ENCODE measurements at regions of chr9 and their contacts with region 1.

Region 1: GRCh38 chr9:96245399-96245798 is 56.6 kb downstream of the HSD17B3 start:
- DNase-seq: no peak
- ATAC-seq: peak; percentile 39
- H3K4me3 ChIP-seq: no peak overlapping the region
- H3K27ac ChIP-seq: no peak overlapping the region
- H3K4me1 ChIP-seq: peaks cover 17 to 25% of the 10 kb centered on the region in 2 experiments
- H3K27me3 ChIP-seq: no peaks in the 10 kb centered on the region
- CTCF ChIP-seq: peak; percentile 24 to 71 (median 71); a peak in 5 of 6 replicates
- POLR2A ChIP-seq: no peak
- RAD21 ChIP-seq: peak; percentile 31

Region 2: GRCh38 chr9:96109680-96110351 is 135.6 kb before region 1 on chr9:
- CTCF ChIA-PET with region 1: no interaction called
- POLR2A ChIA-PET with region 1: no interaction called
- RAD21 ChIA-PET with region 1: no interaction called
- intact Hi-C with region 1: no loop called
- DNase-seq: no peak
- ATAC-seq: no peak
- H3K4me3 ChIP-seq: no peak overlapping the region
- H3K27ac ChIP-seq: no peak overlapping the region
- H3K4me1 ChIP-seq: no peaks in the 10 kb centered on the region
- H3K27me3 ChIP-seq: no peaks in the 10 kb centered on the region; the same call in 1 of the 2 replicates
- CTCF ChIP-seq: no peak
- POLR2A ChIP-seq: no peak
- RAD21 ChIP-seq: no peak

Region 3: DNA sequence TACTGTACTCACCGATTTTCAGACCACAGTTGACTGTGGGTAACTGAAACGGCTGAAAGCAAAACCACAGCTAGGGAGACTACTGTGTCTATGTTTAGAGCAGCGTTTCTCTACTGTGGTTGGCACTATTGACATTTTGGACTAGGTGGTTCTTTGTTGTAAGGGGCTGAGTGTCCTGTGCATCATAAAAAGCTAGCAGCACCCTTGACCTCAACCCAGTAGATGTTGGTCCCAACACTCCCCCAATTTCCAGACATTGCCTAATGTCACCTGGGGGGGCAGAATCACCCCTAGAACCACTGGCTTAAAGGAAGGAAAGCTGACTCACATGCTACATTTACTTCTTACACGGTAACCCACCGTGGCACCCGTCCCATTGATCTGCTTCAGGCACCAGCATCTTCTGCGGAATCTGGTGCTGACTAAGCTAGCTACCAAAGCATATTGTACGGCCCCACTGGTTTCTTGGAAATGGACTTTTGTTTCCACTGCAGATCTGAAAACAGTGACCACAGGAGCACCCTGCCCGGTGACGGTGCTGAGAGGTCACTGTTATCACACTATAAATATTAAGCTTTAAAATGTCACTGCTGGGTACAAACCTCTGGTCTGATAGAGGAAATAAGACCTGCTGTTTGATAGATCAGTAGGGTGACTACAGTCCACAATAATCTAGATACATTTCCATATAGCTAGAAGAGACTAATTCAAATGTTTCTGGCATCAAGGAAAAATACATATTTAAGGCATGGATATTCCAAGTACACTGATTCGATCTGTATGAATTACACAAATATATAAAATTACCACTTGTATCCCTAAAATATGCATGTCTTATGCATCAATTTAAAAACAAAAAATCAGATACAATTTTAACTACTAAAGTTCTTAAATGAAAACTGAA is 94.8 kb before region 1 on chr9:
- CTCF ChIA-PET with region 1: no interaction called
- POLR2A ChIA-PET with region 1: no interaction called
- RAD21 ChIA-PET with region 1: no interaction called
- intact Hi-C with region 1: no loop called
- DNase-seq: no peak
- ATAC-seq: no peak
- H3K4me3 ChIP-seq: no peak overlapping the region
- H3K27ac ChIP-seq: no peak overlapping the region
- H3K4me1 ChIP-seq: no peaks in the 10 kb centered on the region
- H3K27me3 ChIP-seq: peaks cover 12% of the 10 kb centered on the region
- CTCF ChIP-seq: no peak
- POLR2A ChIP-seq: no peak
- RAD21 ChIP-seq: no peak

Region 4: DNA sequence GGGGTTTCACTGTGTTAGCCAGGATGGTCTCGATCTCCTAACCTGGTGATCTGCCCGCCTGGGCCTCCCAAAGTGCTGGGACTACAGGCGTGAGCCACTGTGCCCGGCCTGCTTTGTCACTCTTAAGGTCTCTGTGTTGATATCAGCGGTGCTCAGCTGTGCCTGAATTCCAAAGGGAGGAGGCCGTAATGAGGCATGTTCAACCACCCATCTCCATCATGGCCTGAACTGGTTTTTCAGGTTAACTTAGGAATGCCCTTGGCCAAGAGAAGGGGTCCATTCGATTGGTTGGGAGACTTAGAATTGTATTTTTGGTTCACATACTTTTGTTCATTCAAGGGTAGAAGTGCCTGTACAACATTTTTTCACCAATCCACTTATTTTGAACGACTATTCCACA is 34.6 kb after region 1 on chr9:
- CTCF ChIA-PET with region 1: no interaction called
- POLR2A ChIA-PET with region 1: no interaction called
- RAD21 ChIA-PET with region 1: no interaction called
- intact Hi-C with region 1: no loop called
- DNase-seq: no peak
- ATAC-seq: no peak; the same call in 1 of the 2 replicates
- H3K4me3 ChIP-seq: no peak overlapping the region
- H3K27ac ChIP-seq: no peak overlapping the region
- H3K4me1 ChIP-seq: peaks cover 0 to 3% of the 10 kb centered on the region in 2 experiments; a peak in 1 of 4 replicates
- H3K27me3 ChIP-seq: no peaks in the 10 kb centered on the region
- CTCF ChIP-seq: no peak
- POLR2A ChIP-seq: no peak
- RAD21 ChIP-seq: no peak

Region 5: GRCh38 chr9:96293498-96294158 is 48.2 kb after region 1 on chr9:
- CTCF ChIA-PET with region 1: no interaction called
- POLR2A ChIA-PET with region 1: no interaction called
- RAD21 ChIA-PET with region 1: no interaction called
- intact Hi-C with region 1: no loop called
- DNase-seq: peak; percentile 10
- ATAC-seq: peak; percentile 63
- H3K4me3 ChIP-seq: no peak overlapping the region
- H3K27ac ChIP-seq: no peak overlapping the region
- H3K4me1 ChIP-seq: peaks cover 8 to 12% of the 10 kb centered on the region in 2 experiments; a peak in 3 of 4 replicates
- H3K27me3 ChIP-seq: no peaks in the 10 kb centered on the region
- CTCF ChIP-seq: no peak
- POLR2A ChIP-seq: no peak
- RAD21 ChIP-seq: no peak

Region 6: DNA sequence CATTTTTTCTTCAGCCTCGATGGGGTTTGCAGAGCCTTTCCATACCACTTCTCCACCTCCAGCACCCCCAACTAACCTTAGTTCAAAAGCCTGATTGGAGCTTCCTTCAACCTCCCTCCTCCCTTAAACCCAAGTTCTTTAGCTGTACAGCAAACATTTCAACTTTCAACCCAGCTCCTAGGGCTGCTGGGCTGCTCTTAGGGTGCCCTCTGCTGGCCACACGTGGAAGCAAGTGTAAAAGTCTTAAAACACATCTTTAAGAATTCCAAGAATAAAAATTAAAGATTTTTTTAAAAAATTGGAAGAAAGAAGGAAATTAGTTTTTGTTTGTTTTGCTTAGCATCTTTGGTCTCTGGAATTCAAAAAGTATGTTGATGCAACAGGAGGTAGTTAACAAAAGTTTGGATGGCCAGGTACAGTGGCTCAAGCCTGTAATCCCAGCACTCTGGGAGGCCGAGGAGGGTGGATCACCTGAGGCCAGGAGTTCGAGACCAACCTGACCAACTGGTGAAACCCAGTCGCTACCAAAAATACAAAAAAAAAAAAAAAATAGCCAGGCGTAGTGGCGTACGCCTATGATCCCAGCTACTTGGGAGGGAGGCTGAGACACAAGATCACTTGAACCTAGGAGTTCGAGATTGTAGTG is 72.1 kb after region 1 on chr9:
- CTCF ChIA-PET with region 1: interaction called, 16 read pairs
- POLR2A ChIA-PET with region 1: no interaction called
- RAD21 ChIA-PET with region 1: no interaction called
- intact Hi-C with region 1: no loop called
- DNase-seq: peak; percentile 41
- ATAC-seq: peak; percentile 86
- H3K4me3 ChIP-seq: no peak overlapping the region
- H3K27ac ChIP-seq: no peak overlapping the region
- H3K4me1 ChIP-seq: no peaks in the 10 kb centered on the region
- H3K27me3 ChIP-seq: no peaks in the 10 kb centered on the region
- CTCF ChIP-seq: peak; percentile 90 to 95 (median 92)
- POLR2A ChIP-seq: no peak
- RAD21 ChIP-seq: peak; percentile 96